ENCODE measurements at regions of chr9 and their contacts with region 1.

Region 1: GRCh38 chr9:91422758-91423711 is 597 bp downstream of the NFIL3 start:
- DNase-seq: peak; percentile 72 to 82 (median 77)
- H3K4me3 ChIP-seq: peak overlapping the region; percentile 60
- H3K27ac ChIP-seq: peak overlapping the region; percentile 90 to 95
- H3K4me1 ChIP-seq: peaks cover 9% of the 10 kb centered on the region
- H3K27me3 ChIP-seq: no peaks in the 10 kb centered on the region
- CTCF ChIP-seq: peak in 1 of 3 donors; percentile 22
- EP300 ChIP-seq: peak; percentile 89
- POLR2A ChIP-seq: peak; percentile 59

Region 2: DNA sequence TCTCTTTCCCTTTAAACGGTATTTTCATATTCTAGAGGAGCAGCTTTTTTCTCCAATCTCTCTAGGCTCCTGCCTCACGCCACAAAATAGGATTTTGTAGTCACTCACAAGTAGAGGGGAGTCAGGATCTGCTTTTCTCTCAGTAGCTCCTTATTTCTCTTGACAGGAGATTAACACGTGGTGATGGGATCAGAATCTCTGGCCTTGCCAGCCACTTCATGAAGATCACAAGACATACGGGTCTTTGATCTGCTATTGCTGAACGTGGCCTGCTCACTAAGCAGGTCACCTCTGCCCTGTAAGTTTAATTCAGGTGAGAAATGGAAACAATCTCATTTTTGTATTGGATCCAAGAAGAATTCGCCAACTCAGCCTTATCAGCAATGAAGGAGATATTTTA is 1037.9 kb before region 1 on chr9:
- intact Hi-C with region 1: no loop called
- DNase-seq: no peak
- H3K4me3 ChIP-seq: no peak overlapping the region
- H3K27ac ChIP-seq: no peak overlapping the region
- H3K4me1 ChIP-seq: no peaks in the 10 kb centered on the region
- H3K27me3 ChIP-seq: no peaks in the 10 kb centered on the region
- CTCF ChIP-seq: no peak
- EP300 ChIP-seq: no peak
- POLR2A ChIP-seq: no peak

Region 3: GRCh38 chr9:90914868-90915483 is 508.1 kb before region 1 on chr9:
- intact Hi-C with region 1: loop called in 3 of 4 experiments (anchors 5 to 10 kb)
- DNase-seq: peak; percentile 62 to 80 (median 77)
- H3K4me3 ChIP-seq: no peak overlapping the region
- H3K27ac ChIP-seq: no peak overlapping the region
- H3K4me1 ChIP-seq: no peaks in the 10 kb centered on the region
- H3K27me3 ChIP-seq: no peaks in the 10 kb centered on the region
- CTCF ChIP-seq: peak; percentile 71 to 91 (median 88)
- EP300 ChIP-seq: no peak
- POLR2A ChIP-seq: no peak

Region 4: GRCh38 chr9:91101611-91102168 is 321.3 kb before region 1 on chr9:
- intact Hi-C with region 1: loop called in 1 of 4 experiments (anchors 10 kb)
- DNase-seq: no peak
- H3K4me3 ChIP-seq: no peak overlapping the region
- H3K27ac ChIP-seq: no peak overlapping the region
- H3K4me1 ChIP-seq: peaks cover 5% of the 10 kb centered on the region
- H3K27me3 ChIP-seq: no peaks in the 10 kb centered on the region
- CTCF ChIP-seq: no peak
- EP300 ChIP-seq: no peak
- POLR2A ChIP-seq: no peak

Region 5: GRCh38 chr9:91193658-91194391 is 229.2 kb before region 1 on chr9:
- intact Hi-C with region 1: loop called in 3 of 4 experiments (anchors 5 kb)
- DNase-seq: peak; percentile 86 to 91 (median 88)
- H3K4me3 ChIP-seq: peak overlapping the region; percentile 51
- H3K27ac ChIP-seq: peak overlapping the region; percentile 97 to 99
- H3K4me1 ChIP-seq: peaks cover 17% of the 10 kb centered on the region
- H3K27me3 ChIP-seq: no peaks in the 10 kb centered on the region
- CTCF ChIP-seq: peak in 1 of 3 donors; percentile 9
- EP300 ChIP-seq: peak; percentile 92
- POLR2A ChIP-seq: peak; percentile 68

Region 6: GRCh38 chr9:91555132-91555531 is 132.1 kb after region 1 on chr9:
- intact Hi-C with region 1: no loop called
- DNase-seq: no peak
- H3K4me3 ChIP-seq: no peak overlapping the region
- H3K27ac ChIP-seq: no peak overlapping the region
- H3K4me1 ChIP-seq: no peaks in the 10 kb centered on the region
- H3K27me3 ChIP-seq: no peaks in the 10 kb centered on the region
- CTCF ChIP-seq: no peak
- EP300 ChIP-seq: no peak
- POLR2A ChIP-seq: no peak

Region 7: DNA sequence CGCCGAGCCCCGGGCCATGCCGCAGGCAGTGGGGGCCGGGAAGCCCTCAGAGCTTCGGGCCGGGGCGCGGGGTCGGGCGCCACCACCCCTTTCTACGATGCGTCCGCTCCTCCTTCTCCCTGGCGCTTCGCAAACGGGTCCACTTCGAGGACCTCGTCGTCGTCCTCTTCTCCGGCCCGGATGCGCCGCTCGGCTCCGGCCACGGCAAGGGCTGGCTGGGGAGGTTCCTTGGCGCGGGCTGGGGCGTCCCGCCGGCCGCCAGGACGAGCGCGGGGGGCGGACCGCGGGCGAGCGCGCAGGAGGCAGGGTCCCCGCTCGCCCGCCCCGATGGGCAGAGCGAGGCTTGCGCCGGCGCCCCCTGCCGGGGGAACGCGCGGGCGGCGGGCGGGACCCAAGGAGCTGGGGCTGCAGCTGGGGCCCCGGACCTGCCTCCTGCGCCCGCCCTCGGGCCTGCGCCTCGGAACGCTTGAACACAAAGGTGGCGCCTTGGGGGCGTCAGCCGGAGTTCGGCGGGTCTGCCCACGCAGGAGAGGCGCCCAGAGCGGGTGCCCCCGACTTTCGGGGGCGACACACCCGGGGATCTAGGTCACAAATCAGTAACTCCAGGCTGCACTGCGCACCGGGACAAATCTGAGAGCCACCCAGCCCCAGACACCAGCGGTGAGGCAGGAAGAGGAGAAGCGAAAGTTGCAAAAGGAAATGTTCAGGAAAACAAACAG is 527.1 kb after region 1 on chr9 and contains the start of gene ROR2:
- intact Hi-C with region 1: loop called in 1 of 4 experiments (anchors 10 kb)
- DNase-seq: peak; percentile 77 to 92 (median 85)
- H3K4me3 ChIP-seq: peak within 1 kb of the TSS; percentile 49
- H3K27ac ChIP-seq: peak within 1 kb of the TSS; percentile 61 to 85
- H3K4me1 ChIP-seq: peaks cover 7% of the 10 kb centered on the region
- H3K27me3 ChIP-seq: no peaks in the 10 kb centered on the region
- CTCF ChIP-seq: peak; percentile 20 to 97 (median 92)
- EP300 ChIP-seq: no peak
- POLR2A ChIP-seq: no peak
- total RNA-seq, gene ROR2: 13.1 to 35.5 (median 31.8) TPM